ENCODE measurements at regions of chr5 and their contacts with region 1.

Region 1: DNA sequence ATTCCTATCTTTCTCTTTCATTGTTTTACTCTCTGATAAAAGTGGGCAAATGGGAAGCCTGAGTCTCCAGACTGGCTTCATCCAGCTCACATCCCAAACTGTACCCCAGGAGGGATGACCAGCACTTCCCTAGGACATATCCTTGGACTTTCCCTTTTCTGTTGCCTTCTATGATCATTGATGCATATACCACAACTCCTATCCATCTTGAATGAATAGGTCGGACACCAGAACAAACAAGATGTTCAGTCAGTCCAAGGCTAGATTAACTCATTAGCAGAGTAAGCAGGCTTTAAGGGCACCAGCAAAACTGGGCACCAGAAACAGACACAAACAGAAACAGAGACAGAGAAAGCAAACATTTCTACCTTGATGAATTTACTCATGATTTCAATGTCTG is 159.1 kb upstream of the RGMB start:
- DNase-seq: no peak
- ATAC-seq: no peak
- H3K4me3 ChIP-seq: no peak overlapping the region
- H3K27ac ChIP-seq: no peak overlapping the region
- H3K4me1 ChIP-seq: no peaks in the 10 kb centered on the region
- H3K27me3 ChIP-seq: no peaks in the 10 kb centered on the region
- CTCF ChIP-seq: no peak
- POLR2A ChIP-seq: no peak
- RAD21 ChIP-seq: no peak

Region 2: GRCh38 chr5:98292496-98292895 is 321.8 kb before region 1 on chr5:
- CTCF ChIA-PET with region 1: no interaction called
- POLR2A ChIA-PET with region 1: no interaction called
- dilution Hi-C with region 1: no loop called
- in situ Hi-C with region 1: no loop called
- intact Hi-C with region 1: loop called (anchors 1 kb)
- DNase-seq: peak; percentile 62
- ATAC-seq: 0 out of 2 replicates have a peak, but pooled peaks have one; percentile 17
- H3K4me3 ChIP-seq: no peak overlapping the region
- H3K27ac ChIP-seq: no peak overlapping the region
- H3K4me1 ChIP-seq: peaks cover 4% of the 10 kb centered on the region; the same call in 1 of the 2 replicates
- H3K27me3 ChIP-seq: no peaks in the 10 kb centered on the region
- CTCF ChIP-seq: no peak
- POLR2A ChIP-seq: no peak
- RAD21 ChIP-seq: no peak

Region 3: GRCh38 chr5:98705841-98706240 is 91.5 kb after region 1 on chr5:
- CTCF ChIA-PET with region 1: no interaction called
- POLR2A ChIA-PET with region 1: no interaction called
- dilution Hi-C with region 1: no loop called
- in situ Hi-C with region 1: no loop called
- intact Hi-C with region 1: no loop called
- DNase-seq: peak; percentile 49
- ATAC-seq: no peak
- H3K4me3 ChIP-seq: no peak overlapping the region
- H3K27ac ChIP-seq: no peak overlapping the region
- H3K4me1 ChIP-seq: no peaks in the 10 kb centered on the region
- H3K27me3 ChIP-seq: no peaks in the 10 kb centered on the region
- CTCF ChIP-seq: no peak
- POLR2A ChIP-seq: no peak
- RAD21 ChIP-seq: no peak